AG04449 (cell line): ENCODE measurements at regions of chr1 and their contacts with region 1.

Region 1: GRCh38 chr1:204363335-204364124 is 3.8 kb upstream of the PLEKHA6 start:
- DNase-seq: no peak
- H3K4me3 ChIP-seq: peak overlapping the region; percentile 50
- CTCF ChIP-seq: peak; percentile 92

Region 2: DNA sequence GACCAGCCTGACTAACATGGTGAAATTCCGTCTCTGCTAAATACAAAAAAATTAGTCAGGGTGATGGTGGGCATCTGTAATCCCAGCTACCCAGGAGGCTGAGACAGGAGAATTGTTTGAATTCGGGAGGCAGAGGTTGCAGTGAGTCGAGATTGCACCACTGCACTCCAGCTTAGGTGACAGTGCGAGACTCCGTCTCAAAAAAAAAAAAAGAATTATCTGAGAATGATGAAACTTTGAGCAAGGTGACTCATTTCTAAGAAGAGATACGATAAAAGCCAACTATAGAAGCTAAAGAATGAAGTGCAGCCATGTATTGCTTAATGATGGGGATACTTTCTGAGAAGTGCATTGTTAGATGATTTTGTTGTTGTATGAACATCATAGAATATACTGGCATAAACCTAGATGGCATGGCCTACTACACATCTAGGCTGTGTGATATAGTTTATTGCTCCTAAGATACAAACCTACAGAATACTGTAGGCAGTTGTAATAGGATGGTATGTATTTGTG is 437.4 kb before region 1 on chr1:
- CTCF ChIA-PET with region 1: no interaction called
- POLR2A ChIA-PET with region 1: no interaction called
- DNase-seq: no peak
- H3K4me3 ChIP-seq: no peak overlapping the region
- CTCF ChIP-seq: no peak

Region 3: DNA sequence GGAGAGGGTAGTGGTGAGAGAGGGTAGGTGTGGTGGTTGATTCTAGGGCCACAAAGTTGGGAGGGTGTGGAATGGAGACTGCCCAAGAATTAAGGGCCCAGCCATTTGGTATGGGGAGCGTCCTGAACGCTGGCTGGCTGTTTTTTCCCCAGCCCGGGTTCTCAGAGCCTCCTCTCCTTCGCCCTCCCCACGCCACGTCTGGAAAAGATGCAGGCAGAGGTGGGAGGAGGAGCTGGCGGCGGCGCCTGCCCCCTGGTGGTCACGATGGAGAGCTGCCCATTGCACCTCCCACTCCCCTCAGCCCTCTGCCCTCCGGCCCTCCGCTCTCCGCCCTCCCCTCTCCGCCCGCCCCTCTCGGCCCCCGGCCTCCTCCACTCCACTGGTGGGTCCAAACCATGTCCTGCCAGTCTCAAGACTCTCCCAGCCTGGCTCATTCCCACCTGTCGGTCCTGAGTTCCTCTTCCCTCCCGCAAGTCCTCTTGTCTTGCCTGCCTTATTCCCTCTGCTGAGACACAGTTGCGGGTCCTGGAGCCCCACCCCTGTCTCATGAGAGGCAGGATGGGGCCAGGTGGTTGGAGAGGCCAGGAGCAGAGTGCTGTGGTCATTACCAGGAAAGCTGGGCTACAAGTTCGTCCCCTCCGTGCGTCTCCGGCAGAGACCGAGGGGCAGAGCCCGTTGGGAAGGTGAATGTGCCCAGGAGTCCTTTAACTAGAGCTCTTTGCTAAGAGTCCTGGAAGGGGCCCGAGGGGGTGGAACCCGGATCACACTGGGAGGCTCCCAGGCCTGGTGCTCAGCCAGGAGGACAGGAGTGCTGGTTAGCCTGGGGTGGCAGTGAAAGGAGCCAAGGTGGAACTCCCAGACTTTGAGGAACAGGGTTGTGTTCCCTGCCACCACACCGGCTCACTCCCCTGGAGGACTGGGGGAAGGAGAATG is 234.3 kb before region 1 on chr1:
- CTCF ChIA-PET with region 1: interaction called, 29 read pairs
- POLR2A ChIA-PET with region 1: no interaction called
- DNase-seq: no peak
- H3K4me3 ChIP-seq: no peak overlapping the region
- CTCF ChIP-seq: peak; percentile 96

Region 4: GRCh38 chr1:204213668-204214662 is 149.6 kb before region 1 on chr1 and contains the start of gene GOLT1A:
- CTCF ChIA-PET with region 1: interaction called, 319 read pairs
- POLR2A ChIA-PET with region 1: interaction called, 8 read pairs
- DNase-seq: peak; percentile 59
- H3K4me3 ChIP-seq: peak within 1 kb of the TSS; percentile 8
- CTCF ChIP-seq: peak; percentile 75

Region 5: DNA sequence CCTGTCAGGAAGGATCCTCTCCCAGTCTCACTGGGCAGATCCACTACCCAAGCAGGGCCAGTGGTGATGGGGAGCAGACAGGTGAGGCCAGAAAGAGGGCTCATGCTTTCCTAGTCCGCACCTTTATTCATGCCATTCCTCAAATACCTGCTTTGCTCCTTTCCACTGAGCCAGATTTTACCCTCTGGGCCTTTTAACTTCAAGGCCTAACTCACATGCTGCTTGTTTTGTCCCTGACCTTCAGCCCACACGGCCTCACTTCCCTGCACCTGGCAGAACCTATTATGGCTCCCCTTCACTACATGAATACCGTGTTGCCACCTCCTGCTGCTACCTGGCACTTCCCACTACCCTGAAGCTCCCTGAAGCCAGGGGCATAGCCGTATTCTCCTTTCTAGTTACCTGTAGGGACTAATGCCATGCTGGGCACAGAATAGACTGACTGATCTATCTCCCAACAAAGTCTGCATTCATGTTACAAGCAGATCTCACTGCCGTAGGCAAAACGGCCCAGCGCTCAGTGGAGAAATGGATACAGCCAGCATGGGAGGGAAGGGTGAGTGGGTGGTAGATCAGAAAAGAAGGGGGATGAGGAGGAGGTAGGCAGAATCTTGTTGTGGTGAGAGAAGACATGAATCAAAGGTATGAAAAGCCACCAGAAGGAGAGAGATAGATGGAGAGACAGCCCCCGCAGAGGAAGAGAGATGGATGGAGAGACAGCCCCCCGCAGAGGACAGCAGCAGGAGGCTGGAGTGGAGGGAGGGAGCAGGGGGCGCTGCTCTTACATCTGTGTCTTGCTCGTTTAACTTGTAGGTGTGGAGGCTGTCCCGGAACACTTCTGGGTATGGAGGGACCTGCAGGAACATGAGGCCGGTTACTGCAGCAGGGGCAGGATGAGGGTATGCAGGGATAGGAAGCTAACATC is 113.5 kb before region 1 on chr1:
- CTCF ChIA-PET with region 1: interaction called, 335 read pairs
- POLR2A ChIA-PET with region 1: no interaction called
- DNase-seq: no peak
- H3K4me3 ChIP-seq: no peak overlapping the region
- CTCF ChIP-seq: no peak

Region 6: DNA sequence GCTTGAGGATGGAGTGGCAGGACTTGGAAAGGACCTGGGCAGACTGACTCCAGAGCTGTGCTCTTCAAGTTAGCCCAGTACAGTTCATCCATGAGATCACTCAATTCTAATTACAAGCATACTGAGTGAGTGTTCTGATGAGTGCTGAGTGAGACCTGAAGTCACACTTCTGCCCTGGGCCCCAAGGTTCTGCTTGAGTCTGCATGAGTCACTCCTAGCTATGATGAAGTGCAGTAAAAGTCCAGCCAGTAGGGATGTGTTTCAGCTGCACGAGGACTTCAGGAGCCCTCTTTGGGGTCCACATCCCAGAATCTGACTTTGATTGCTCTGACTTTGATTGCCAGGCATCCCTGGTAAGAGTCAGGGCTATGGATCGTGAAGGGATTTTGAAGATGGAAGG is 39.6 kb before region 1 on chr1:
- CTCF ChIA-PET with region 1: interaction called, 21 read pairs
- POLR2A ChIA-PET with region 1: no interaction called
- DNase-seq: no peak
- H3K4me3 ChIP-seq: no peak overlapping the region
- CTCF ChIP-seq: no peak

Region 7: DNA sequence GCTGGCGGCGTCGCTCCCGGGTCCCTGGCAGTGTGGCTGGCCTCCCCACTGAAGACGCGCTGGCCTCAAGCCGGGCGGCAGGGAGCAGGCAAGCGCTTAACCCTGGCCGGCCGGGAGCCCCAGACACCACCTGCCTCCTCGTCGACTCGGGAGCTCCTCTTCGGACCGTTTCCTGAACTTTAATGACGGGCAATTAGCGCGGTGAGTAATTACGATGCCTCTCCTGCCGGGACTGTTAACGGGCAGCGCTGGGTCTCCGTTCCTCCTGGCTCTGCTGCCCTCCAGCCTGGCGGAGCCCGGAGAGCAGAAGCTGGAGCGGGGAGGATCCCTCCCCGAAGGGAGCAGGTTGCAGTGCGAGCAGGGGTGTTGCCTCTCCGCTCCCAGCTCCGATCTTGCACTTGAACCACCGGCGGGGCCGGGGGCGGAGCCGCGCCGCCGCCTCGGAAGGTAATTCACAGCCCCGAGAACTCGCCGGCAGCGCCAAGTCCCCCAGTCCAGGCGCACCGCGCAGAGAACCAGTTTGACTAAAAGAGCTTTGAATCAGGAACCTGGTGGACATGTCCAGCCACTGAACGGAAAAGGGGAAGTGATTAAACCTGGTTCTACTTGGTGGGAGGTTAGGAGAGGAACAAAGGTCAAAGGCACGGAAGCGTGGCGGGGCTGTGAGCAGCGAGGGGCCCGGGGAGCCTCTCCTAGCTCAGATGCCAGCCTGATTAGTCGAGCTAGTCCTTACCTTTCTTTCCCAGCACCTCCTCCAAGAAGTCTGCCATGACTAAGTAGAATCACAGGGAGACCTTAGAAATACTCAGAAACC is 14.5 kb after region 1 on chr1:
- CTCF ChIA-PET with region 1: interaction called, 136 read pairs
- POLR2A ChIA-PET with region 1: no interaction called
- DNase-seq: no peak
- H3K4me3 ChIP-seq: peak overlapping the region; percentile 50
- CTCF ChIP-seq: no peak